ENCODE measurements at regions of chr18 and their contacts with region 1.

Region 1: DNA sequence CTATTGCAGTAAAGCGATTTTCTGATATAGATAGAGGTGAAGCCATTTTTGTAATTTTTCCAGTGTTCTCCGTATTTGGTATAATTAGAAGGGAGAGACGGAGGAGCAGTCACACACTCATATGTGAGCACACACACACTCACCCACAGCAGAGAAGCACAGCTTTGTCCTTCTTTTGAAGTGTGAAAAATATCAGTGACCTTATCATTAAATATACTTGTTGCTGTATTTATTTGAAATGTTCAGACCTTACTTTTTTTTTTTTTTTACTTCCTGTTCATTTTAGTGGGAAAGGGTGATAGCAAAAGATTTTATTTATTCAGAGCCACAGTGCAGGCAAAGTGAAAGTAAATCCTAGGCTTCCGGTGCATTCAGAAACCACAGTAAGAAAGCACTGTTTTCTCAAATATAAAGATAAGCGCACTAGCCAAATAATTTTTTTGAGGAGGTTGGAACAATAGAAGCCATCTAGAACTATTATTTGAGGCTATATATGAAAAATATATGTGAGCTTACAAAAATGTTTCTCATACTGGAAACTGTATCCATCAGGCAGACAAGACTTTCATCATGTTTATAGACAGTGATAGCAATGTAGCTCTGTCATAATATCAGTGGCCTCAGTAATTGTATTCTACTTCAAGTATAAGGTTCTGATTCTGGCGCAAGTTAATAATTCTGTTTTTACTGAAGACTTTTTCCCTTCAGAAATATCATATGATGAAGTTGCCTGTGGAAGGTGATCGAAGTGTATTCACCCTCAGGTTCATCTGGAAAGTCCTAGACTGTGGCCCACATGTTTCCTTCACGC is 37.2 kb downstream of the TSHZ1 start:
- DNase-seq: peak; percentile 54
- H3K4me3 ChIP-seq: peak overlapping the region; percentile 53 to 59 (median 56)
- H3K27ac ChIP-seq: peak overlapping the region; percentile 68
- H3K4me1 ChIP-seq: peaks cover 32% of the 10 kb centered on the region
- H3K27me3 ChIP-seq: no peaks in the 10 kb centered on the region
- CTCF ChIP-seq: no peak

Region 2: GRCh38 chr18:74896390-74896991 is 351.3 kb before region 1 on chr18:
- CTCF ChIA-PET with region 1: interaction called, 6 read pairs
- dilution Hi-C with region 1: no loop called
- in situ Hi-C with region 1: no loop called
- intact Hi-C with region 1: loop called (anchors 1 kb)
- DNase-seq: peak; percentile 62
- H3K4me3 ChIP-seq: no peak overlapping the region
- H3K27ac ChIP-seq: no peak overlapping the region
- H3K4me1 ChIP-seq: peaks cover 6% of the 10 kb centered on the region
- H3K27me3 ChIP-seq: no peaks in the 10 kb centered on the region
- CTCF ChIP-seq: peak; percentile 83 to 89

Region 3: DNA sequence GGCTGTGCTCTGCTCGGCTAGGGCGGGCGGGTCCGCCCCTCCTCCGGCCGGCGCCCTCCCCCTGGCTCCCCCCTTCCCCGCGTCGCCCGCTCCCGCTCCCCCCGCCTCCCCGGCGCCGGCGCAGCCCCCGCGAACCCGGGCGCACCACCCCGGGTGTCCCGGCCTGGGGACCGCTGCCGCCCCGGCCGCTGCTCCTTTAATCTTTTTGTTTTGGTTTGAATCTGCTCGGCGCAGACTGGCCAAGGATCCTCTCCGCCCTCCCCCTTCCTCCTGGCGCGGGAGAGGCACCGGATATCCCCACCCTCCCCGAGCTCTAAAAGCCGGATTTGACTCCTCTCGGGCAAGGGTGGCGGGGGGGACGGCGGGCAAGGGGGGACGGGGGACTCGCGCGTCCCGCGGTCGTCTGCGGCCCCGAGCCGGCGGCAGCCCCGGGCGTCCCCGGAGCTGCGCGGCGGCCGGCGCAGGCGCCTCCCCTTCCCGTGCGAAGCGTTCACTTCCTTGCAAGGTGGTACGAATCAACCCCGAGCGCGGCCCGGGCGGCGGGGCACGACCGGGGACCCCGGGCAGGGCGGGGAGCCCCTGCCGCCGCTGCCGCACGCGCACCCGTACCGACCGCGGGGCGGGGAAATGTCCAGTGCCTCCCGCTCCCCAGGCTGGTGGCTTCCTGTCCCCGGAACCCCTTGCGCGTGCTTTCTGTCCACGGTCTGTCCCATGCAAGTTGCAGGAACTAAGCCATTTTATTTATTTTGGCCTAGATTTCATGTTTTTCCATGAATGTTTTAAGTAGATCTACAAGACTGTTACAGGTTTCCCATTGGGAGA is 38.5 kb before region 1 on chr18 and contains the start of gene PTGR3:
- CTCF ChIA-PET with region 1: interaction called, 9 read pairs
- dilution Hi-C with region 1: no loop called
- in situ Hi-C with region 1: no loop called
- intact Hi-C with region 1: loop called (anchors 1 kb)
- DNase-seq: peak; percentile 81
- H3K4me3 ChIP-seq: peak within 1 kb of the TSS; percentile 79 to 98 (median 88)
- H3K27ac ChIP-seq: peak within 1 kb of the TSS; percentile 74
- H3K4me1 ChIP-seq: peaks cover 36% of the 10 kb centered on the region
- H3K27me3 ChIP-seq: no peaks in the 10 kb centered on the region
- CTCF ChIP-seq: no peak
- total RNA-seq, gene PTGR3: 15.2 to 29.4 TPM

Region 4: GRCh38 chr18:75226286-75226955 is 21.4 kb before region 1 on chr18:
- CTCF ChIA-PET with region 1: no interaction called
- dilution Hi-C with region 1: no loop called
- in situ Hi-C with region 1: no loop called
- intact Hi-C with region 1: no loop called
- DNase-seq: no peak
- H3K4me3 ChIP-seq: no peak overlapping the region
- H3K27ac ChIP-seq: no peak overlapping the region
- H3K4me1 ChIP-seq: no peaks in the 10 kb centered on the region
- H3K27me3 ChIP-seq: no peaks in the 10 kb centered on the region
- CTCF ChIP-seq: no peak

Region 5: GRCh38 chr18:75293591-75293990 is 45.8 kb after region 1 on chr18:
- CTCF ChIA-PET with region 1: no interaction called
- dilution Hi-C with region 1: no loop called
- in situ Hi-C with region 1: no loop called
- intact Hi-C with region 1: no loop called
- DNase-seq: peak; percentile 9
- H3K4me3 ChIP-seq: no peak overlapping the region
- H3K27ac ChIP-seq: no peak overlapping the region
- H3K4me1 ChIP-seq: no peaks in the 10 kb centered on the region
- H3K27me3 ChIP-seq: peaks cover 2% of the 10 kb centered on the region
- CTCF ChIP-seq: no peak

Region 6: GRCh38 chr18:75478996-75479880 is 231.4 kb after region 1 on chr18:
- CTCF ChIA-PET with region 1: interaction called, 5 read pairs
- dilution Hi-C with region 1: no loop called
- in situ Hi-C with region 1: no loop called
- intact Hi-C with region 1: loop called (anchors 2 kb)
- DNase-seq: peak; percentile 40
- H3K4me3 ChIP-seq: no peak overlapping the region
- H3K27ac ChIP-seq: no peak overlapping the region
- H3K4me1 ChIP-seq: peaks cover 5% of the 10 kb centered on the region
- H3K27me3 ChIP-seq: no peaks in the 10 kb centered on the region
- CTCF ChIP-seq: peak; percentile 47 to 65

Region 7: GRCh38 chr18:76131738-76132137 is 883.9 kb after region 1 on chr18:
- CTCF ChIA-PET with region 1: no interaction called
- dilution Hi-C with region 1: no loop called
- in situ Hi-C with region 1: no loop called
- intact Hi-C with region 1: loop called (anchors 5 kb)
- DNase-seq: peak; percentile 99
- H3K4me3 ChIP-seq: no peak overlapping the region
- H3K27ac ChIP-seq: peak overlapping the region; percentile 99
- H3K4me1 ChIP-seq: peaks cover 17% of the 10 kb centered on the region
- H3K27me3 ChIP-seq: no peaks in the 10 kb centered on the region
- CTCF ChIP-seq: no peak